Endothelial cell of umbilical vein (primary cell): ENCODE measurements at regions of chr15 and their contacts with region 1.

Region 1: GRCh38 chr15:36004891-36005490 is 459.0 kb upstream of the DPH6 start:
- DNase-seq: peak; percentile 87
- H3K4me3 ChIP-seq: peak overlapping the region in 1 of 3 experiments; percentile 33
- H3K27ac ChIP-seq: peak overlapping the region; percentile 91
- H3K4me1 ChIP-seq: peaks cover 29% of the 10 kb centered on the region
- H3K27me3 ChIP-seq: no peaks in the 10 kb centered on the region
- CTCF ChIP-seq: no peak
- POLR2A ChIP-seq: no peak

Region 2: GRCh38 chr15:35827141-35827540 is 177.8 kb before region 1 on chr15:
- CTCF ChIA-PET with region 1: no interaction called
- POLR2A ChIA-PET with region 1: no interaction called
- dilution Hi-C with region 1: no loop called
- intact Hi-C with region 1: loop called (anchors 1 kb)
- DNase-seq: peak; percentile 77
- H3K4me3 ChIP-seq: no peak overlapping the region
- H3K27ac ChIP-seq: peak overlapping the region; percentile 16
- H3K4me1 ChIP-seq: peaks cover 22% of the 10 kb centered on the region
- H3K27me3 ChIP-seq: no peaks in the 10 kb centered on the region
- CTCF ChIP-seq: no peak
- POLR2A ChIP-seq: no peak

Region 3: DNA sequence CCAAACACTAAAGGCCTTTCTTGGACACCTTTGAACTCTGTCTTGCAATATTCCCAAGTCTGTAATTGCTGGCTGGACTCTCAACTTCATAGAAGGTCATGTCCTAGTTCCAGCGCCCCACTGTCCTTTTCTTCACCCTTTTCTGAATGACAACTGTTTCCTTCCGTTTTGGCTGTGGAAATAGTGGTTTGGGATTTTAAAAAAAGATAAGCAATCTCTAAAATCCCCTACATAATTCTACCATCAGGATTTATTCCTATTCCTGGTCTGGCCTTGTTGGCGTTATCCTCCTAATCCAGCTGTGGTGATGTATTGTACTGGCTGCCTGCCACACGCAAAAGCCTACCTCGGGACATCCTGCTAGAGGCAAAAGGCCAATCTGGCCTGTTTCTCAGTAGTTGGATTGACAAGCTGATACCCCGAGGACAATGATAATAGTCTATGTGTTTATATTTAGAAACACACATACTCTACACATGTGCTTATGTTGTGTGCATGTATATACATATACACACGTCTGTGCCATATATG is 18.7 kb before region 1 on chr15:
- CTCF ChIA-PET with region 1: interaction called, 4 read pairs
- POLR2A ChIA-PET with region 1: no interaction called
- dilution Hi-C with region 1: no loop called
- intact Hi-C with region 1: loop called (anchors 2 kb)
- DNase-seq: peak; percentile 65
- H3K4me3 ChIP-seq: no peak overlapping the region
- H3K27ac ChIP-seq: no peak overlapping the region
- H3K4me1 ChIP-seq: peaks cover 12% of the 10 kb centered on the region
- H3K27me3 ChIP-seq: no peaks in the 10 kb centered on the region
- CTCF ChIP-seq: no peak
- POLR2A ChIP-seq: no peak